ENCODE measurements at regions of chr7 and their contacts with region 1.

Region 1: GRCh38 chr7:151511946-151512345 is 7.7 kb downstream of the RHEB start:
- DNase-seq: no peak
- ATAC-seq: no peak
- H3K4me3 ChIP-seq: no peak overlapping the region
- H3K4me3 Mint-ChIP-seq: no peak overlapping the region
- H3K27ac ChIP-seq: no peak overlapping the region
- H3K27ac Mint-ChIP-seq: no peak overlapping the region
- H3K4me1 ChIP-seq: peaks cover 38% of the 10 kb centered on the region
- H3K4me1 Mint-ChIP-seq: peaks cover 83% of the 10 kb centered on the region
- H3K27me3 ChIP-seq: no peaks in the 10 kb centered on the region
- H3K27me3 Mint-ChIP-seq: no peaks in the 10 kb centered on the region
- CTCF ChIP-seq: no peak

Region 2: GRCh38 chr7:151085691-151086620 is 426.0 kb before region 1 on chr7 and contains the start of gene AGAP3:
- CTCF ChIA-PET with region 1: no interaction called
- POLR2A ChIA-PET with region 1: no interaction called
- intact Hi-C with region 1: no loop called
- DNase-seq: peak in 7 of 9 experiments; percentile 30 to 71 (median 57)
- ATAC-seq: no peak
- H3K4me3 ChIP-seq: peak within 1 kb of the TSS; percentile 65 to 80
- H3K4me3 Mint-ChIP-seq: peak within 1 kb of the TSS; percentile 88
- H3K27ac ChIP-seq: peak within 1 kb of the TSS in 1 of 2 experiments; percentile 51
- H3K27ac Mint-ChIP-seq: peak within 1 kb of the TSS; percentile 85
- H3K4me1 ChIP-seq: peaks cover 58% of the 10 kb centered on the region
- H3K4me1 Mint-ChIP-seq: peaks cover 44% of the 10 kb centered on the region
- H3K27me3 ChIP-seq: no peaks in the 10 kb centered on the region
- H3K27me3 Mint-ChIP-seq: peaks cover 21% of the 10 kb centered on the region
- CTCF ChIP-seq: no peak
- total RNA-seq, gene AGAP3: 35.0 to 36.6 TPM

Region 3: GRCh38 chr7:151472644-151473380 is 39.1 kb before region 1 on chr7:
- CTCF ChIA-PET with region 1: no interaction called
- POLR2A ChIA-PET with region 1: no interaction called
- intact Hi-C with region 1: loop called in 1 of 2 experiments (anchors 5 kb)
- DNase-seq: peak in 2 of 9 experiments; percentile 29 to 37
- ATAC-seq: no peak
- H3K4me3 ChIP-seq: no peak overlapping the region
- H3K4me3 Mint-ChIP-seq: peak overlapping the region; percentile 32
- H3K27ac ChIP-seq: no peak overlapping the region
- H3K27ac Mint-ChIP-seq: peak overlapping the region; percentile 66
- H3K4me1 ChIP-seq: peaks cover 23% of the 10 kb centered on the region
- H3K4me1 Mint-ChIP-seq: peaks cover 48% of the 10 kb centered on the region
- H3K27me3 ChIP-seq: no peaks in the 10 kb centered on the region
- H3K27me3 Mint-ChIP-seq: no peaks in the 10 kb centered on the region
- CTCF ChIP-seq: no peak

Measured in CD8-positive, alpha-beta T cell (primary cell).